ENCODE measurements at regions of chr6 and their contacts with region 1.

Region 1: GRCh38 chr6:116287689-116288282 is 8.1 kb upstream of the TSPYL1 start:
- DNase-seq: no peak
- H3K4me3 ChIP-seq: no peak overlapping the region
- H3K27ac ChIP-seq: no peak overlapping the region
- H3K4me1 ChIP-seq: peaks cover 0 to 2% (median 0%) of the 10 kb centered on the region in 4 experiments; a peak in 1 of 7 replicates
- H3K27me3 ChIP-seq: no peaks in the 10 kb centered on the region
- CTCF ChIP-seq: peak in 2 of 3 experiments; percentile 65 to 79; a peak in 2 of 4 replicates
- EP300 ChIP-seq: no peak
- POLR2A ChIP-seq: no peak
- RAD21 ChIP-seq: peak; percentile 89 to 92

Region 2: GRCh38 chr6:116258520-116258919 is 29.3 kb before region 1 on chr6:
- CTCF ChIA-PET with region 1: no interaction called
- POLR2A ChIA-PET with region 1: no interaction called
- DNase-seq: no peak
- H3K4me3 ChIP-seq: no peak overlapping the region
- H3K27ac ChIP-seq: no peak overlapping the region
- H3K4me1 ChIP-seq: peaks cover 0 to 3% (median under 1%) of the 10 kb centered on the region in 4 experiments; a peak in 2 of 7 replicates
- H3K27me3 ChIP-seq: no peaks in the 10 kb centered on the region
- CTCF ChIP-seq: no peak
- EP300 ChIP-seq: no peak
- POLR2A ChIP-seq: no peak
- RAD21 ChIP-seq: no peak

Region 3: GRCh38 chr6:116314878-116315277 is 27.1 kb after region 1 on chr6:
- CTCF ChIA-PET with region 1: interaction called, 14 read pairs
- POLR2A ChIA-PET with region 1: no interaction called
- DNase-seq: no peak
- H3K4me3 ChIP-seq: no peak overlapping the region
- H3K27ac ChIP-seq: no peak overlapping the region
- H3K4me1 ChIP-seq: no peaks in the 10 kb centered on the region; a peak in 1 of 7 replicates
- H3K27me3 ChIP-seq: peaks cover 0 to 1% (median 0%) of the 10 kb centered on the region in 4 experiments; a peak in 1 of 7 replicates
- CTCF ChIP-seq: no peak
- EP300 ChIP-seq: no peak
- POLR2A ChIP-seq: no peak
- RAD21 ChIP-seq: no peak

Region 4: GRCh38 chr6:116371120-116371917 is 83.5 kb after region 1 on chr6:
- CTCF ChIA-PET with region 1: interaction called, 12 read pairs
- POLR2A ChIA-PET with region 1: interaction called, 14 read pairs
- DNase-seq: peak; percentile 70 to 83
- H3K4me3 ChIP-seq: peak overlapping the region; percentile 81 to 92 (median 86)
- H3K27ac ChIP-seq: peak overlapping the region; percentile 83
- H3K4me1 ChIP-seq: peaks cover 0 to 5% (median 2%) of the 10 kb centered on the region in 4 experiments; a peak in 4 of 7 replicates
- H3K27me3 ChIP-seq: no peaks in the 10 kb centered on the region
- CTCF ChIP-seq: no peak
- EP300 ChIP-seq: no peak
- POLR2A ChIP-seq: peak in 1 of 2 experiments; percentile 66; a peak in 2 of 3 replicates
- RAD21 ChIP-seq: 0 out of 4 replicates have a peak, but pooled peaks of 1 of the 2 experiments have one; percentile 4

Region 5: GRCh38 chr6:116444092-116444491 is 156.3 kb after region 1 on chr6:
- CTCF ChIA-PET with region 1: interaction called, 14 read pairs
- POLR2A ChIA-PET with region 1: no interaction called
- DNase-seq: no peak
- H3K4me3 ChIP-seq: no peak overlapping the region
- H3K27ac ChIP-seq: no peak overlapping the region
- H3K4me1 ChIP-seq: 0 out of 7 replicates have a peak, but pooled peaks cover 0 to 2% (median 0%) of the 10 kb centered on the region in 4 experiments
- H3K27me3 ChIP-seq: no peaks in the 10 kb centered on the region
- CTCF ChIP-seq: peak in 2 of 3 experiments; percentile 18 to 54; a peak in 2 of 4 replicates
- EP300 ChIP-seq: no peak
- POLR2A ChIP-seq: no peak
- RAD21 ChIP-seq: peak; percentile 27 to 39

Region 6: DNA sequence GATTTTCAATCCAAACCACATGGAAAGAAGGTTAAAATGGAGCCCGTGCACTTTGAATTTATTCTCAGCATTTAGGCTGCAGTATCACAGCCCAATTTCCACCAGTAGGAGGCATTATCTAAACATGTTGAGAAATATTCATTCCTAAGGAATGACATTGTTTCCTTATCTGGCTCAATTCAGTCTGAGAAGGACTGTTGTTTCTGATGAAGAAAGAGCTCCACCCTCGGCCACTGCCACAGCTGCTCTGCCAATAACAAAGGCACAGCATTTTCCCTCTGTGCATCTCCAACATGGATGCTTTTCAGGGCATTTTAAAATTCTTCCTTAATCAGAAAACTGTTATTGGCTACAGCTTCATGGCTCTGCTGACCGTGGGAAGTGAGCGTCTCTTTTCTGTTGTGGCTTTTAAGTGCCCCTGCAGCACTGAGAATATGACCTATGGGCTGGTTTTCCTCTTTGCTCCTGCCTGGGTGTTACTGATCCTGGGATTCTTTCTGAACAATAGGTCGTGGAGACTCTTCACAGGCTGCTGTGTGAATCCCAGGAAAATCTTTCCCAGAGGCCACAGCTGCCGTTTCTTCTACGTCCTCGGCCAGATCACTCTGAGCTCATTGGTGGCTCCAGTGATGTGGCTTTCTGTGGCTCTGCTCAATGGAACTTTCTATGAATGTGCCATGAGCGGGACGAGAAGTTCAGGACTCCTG is 223.8 kb after region 1 on chr6 and contains the start of gene CALHM5:
- CTCF ChIA-PET with region 1: interaction called, 28 read pairs
- POLR2A ChIA-PET with region 1: interaction called, 3 read pairs
- DNase-seq: no peak
- H3K4me3 ChIP-seq: no peak within 1 kb of the TSS
- H3K27ac ChIP-seq: peak within 1 kb of the TSS; percentile 31; the same call in 1 of the 2 replicates
- H3K4me1 ChIP-seq: peaks cover 0 to 11% (median 4%) of the 10 kb centered on the region in 4 experiments; a peak in 4 of 7 replicates
- H3K27me3 ChIP-seq: peaks cover 0 to 1% (median 0%) of the 10 kb centered on the region in 4 experiments; a peak in 1 of 7 replicates
- CTCF ChIP-seq: peak in 2 of 3 experiments; percentile 38 to 66; a peak in 2 of 4 replicates
- EP300 ChIP-seq: no peak
- POLR2A ChIP-seq: no peak
- RAD21 ChIP-seq: peak; percentile 30 to 44
- total RNA-seq, gene CALHM5: 0.09 and 0.17 TPM in 2 replicates

Region 7: GRCh38 chr6:116556065-116556464 is 268.3 kb after region 1 on chr6:
- CTCF ChIA-PET with region 1: interaction called, 16 read pairs
- POLR2A ChIA-PET with region 1: no interaction called
- DNase-seq: no peak
- H3K4me3 ChIP-seq: no peak overlapping the region
- H3K27ac ChIP-seq: no peak overlapping the region
- H3K4me1 ChIP-seq: no peaks in the 10 kb centered on the region
- H3K27me3 ChIP-seq: no peaks in the 10 kb centered on the region
- CTCF ChIP-seq: no peak
- EP300 ChIP-seq: no peak
- POLR2A ChIP-seq: no peak
- RAD21 ChIP-seq: no peak

Measured in H1 (cell line).